Activated naive CD4-positive, alpha-beta T cell treated with anti-CD3 and anti-CD28 coated beads, Interleukin-2, amount 10 ng/mL, durations not matched to agents 7 days and 5 days (primary cell): ENCODE measurements at regions of chr12 and their contacts with region 1.

Region 1: GRCh38 chr12:48851883-48852733 is at the start of gene DDX23:
- DNase-seq: peak; percentile 96
- H3K4me3 Mint-ChIP-seq: peak within 1 kb of the TSS; percentile 97
- H3K27ac Mint-ChIP-seq: peak within 1 kb of the TSS; percentile 91
- H3K4me1 Mint-ChIP-seq: peaks cover 44% of the 10 kb centered on the region
- H3K27me3 Mint-ChIP-seq: no peaks in the 10 kb centered on the region

Region 2: DNA sequence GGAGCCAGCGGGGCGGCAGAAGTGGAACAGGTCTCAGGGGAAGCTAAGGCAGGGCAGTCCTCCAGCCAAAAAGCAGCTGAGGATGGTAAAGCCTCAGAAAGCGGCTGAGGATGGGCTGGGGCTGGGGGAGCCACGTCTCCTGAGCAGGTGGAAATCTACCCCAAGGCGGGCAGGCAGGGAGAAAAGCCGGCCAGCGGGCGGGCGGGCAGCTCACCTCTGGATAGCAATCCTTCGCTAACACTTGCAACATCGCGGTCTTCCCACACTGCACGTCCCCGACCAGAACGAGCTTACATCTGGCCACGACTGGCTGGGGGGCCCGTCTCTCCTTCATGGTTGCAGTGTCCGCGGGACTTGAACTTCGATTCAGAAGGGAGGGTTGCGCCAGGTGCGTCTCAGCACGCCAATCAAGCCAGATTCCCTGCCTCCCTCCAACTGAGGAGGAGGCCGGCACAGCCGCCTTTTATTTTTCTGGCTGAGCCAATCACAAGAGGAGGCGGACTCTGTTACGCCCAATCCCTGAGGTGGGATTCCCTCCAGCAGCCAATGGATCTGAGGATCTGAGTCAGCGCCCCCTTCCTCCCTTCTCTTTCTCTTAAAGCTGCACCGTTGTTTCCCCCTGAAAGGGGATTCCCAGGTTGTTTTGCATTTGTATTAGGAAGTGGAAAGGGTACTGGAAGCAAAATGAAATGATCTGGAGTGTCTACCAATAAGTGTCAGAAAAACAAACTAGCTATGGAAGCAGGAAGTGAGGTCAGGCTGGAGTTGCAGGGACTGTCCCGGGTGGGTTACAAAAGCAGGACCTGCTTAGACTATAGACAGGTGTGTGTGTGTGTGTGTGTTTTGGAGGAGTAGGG is 13.6 kb after region 1 on chr12 and contains the start of gene RND1:
- CTCF ChIA-PET with region 1: interaction called, 11 read pairs
- DNase-seq: peak; percentile 91
- H3K4me3 Mint-ChIP-seq: peak within 1 kb of the TSS; percentile 83
- H3K27ac Mint-ChIP-seq: peak within 1 kb of the TSS; percentile 80
- H3K4me1 Mint-ChIP-seq: peaks cover 26% of the 10 kb centered on the region
- H3K27me3 Mint-ChIP-seq: peaks cover 36% of the 10 kb centered on the region

Region 3: DNA sequence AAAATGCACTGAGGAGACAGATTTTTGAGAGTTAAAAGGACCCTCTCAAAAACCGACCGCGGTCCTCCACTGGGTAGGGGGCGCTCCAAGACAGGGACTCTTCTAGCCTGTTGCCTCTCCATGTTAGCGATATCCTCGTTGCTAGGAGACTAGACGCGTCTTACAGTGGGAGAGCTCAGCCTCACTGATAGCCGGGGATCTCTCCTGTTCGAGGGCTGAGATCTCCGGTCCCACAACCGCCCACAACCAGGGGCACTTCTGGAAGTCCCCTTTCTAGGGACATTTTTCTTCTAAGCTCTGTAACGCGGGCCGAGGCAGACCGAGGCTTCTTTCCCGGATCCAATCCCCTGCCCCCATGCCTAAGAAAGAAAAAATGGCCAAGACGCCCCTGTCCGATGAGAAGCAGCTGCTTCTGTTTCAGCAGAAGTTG is 51.9 kb after region 1 on chr12:
- CTCF ChIA-PET with region 1: interaction called, 25 read pairs
- DNase-seq: peak; percentile 91
- H3K4me3 Mint-ChIP-seq: peak overlapping the region; percentile 61
- H3K27ac Mint-ChIP-seq: no peak overlapping the region
- H3K4me1 Mint-ChIP-seq: peaks cover 11% of the 10 kb centered on the region
- H3K27me3 Mint-ChIP-seq: peaks cover 43% of the 10 kb centered on the region

Region 4: DNA sequence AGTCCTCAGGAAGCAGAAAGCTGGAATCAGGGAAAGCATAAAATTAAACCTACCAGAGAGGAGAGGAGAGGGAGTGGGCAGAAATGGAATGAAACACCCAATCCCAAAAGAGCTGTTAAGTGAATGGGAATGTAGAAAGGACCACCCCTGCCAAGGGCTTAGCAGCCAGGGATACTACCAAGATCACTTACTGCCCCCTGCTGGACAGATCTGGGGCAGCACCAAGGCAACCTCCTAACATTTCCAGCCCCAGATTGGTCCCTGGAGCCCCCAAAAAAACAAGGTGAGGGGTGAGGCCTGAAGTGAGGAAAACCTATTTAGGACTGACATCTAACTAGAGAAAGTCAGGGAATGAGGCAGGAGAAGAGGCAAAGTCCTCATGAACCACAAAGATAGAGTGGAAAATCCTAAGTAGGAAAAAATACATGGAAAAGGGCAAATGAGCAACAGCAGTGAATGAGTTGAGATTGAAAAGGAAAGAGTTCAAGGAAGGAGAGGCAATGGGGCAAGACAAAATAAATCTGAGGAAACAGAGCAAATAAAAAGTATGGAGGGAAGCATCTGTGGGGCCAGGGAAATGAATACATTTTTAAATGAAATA is 84.4 kb after region 1 on chr12:
- CTCF ChIA-PET with region 1: interaction called, 77 read pairs
- DNase-seq: peak; percentile 88
- H3K4me3 Mint-ChIP-seq: no peak overlapping the region
- H3K27ac Mint-ChIP-seq: no peak overlapping the region
- H3K4me1 Mint-ChIP-seq: peaks cover 11% of the 10 kb centered on the region
- H3K27me3 Mint-ChIP-seq: no peaks in the 10 kb centered on the region

Region 5: GRCh38 chr12:48988030-48988649 is 136.0 kb after region 1 on chr12:
- CTCF ChIA-PET with region 1: interaction called, 26 read pairs
- DNase-seq: peak; percentile 84
- H3K4me3 Mint-ChIP-seq: no peak overlapping the region
- H3K27ac Mint-ChIP-seq: no peak overlapping the region
- H3K4me1 Mint-ChIP-seq: peaks cover 9% of the 10 kb centered on the region
- H3K27me3 Mint-ChIP-seq: peaks cover 95% of the 10 kb centered on the region